Lower leg skin (tissue), 4 donors: ENCODE measurements at regions of chr6 and their contacts with region 1.

Region 1: GRCh38 chr6:93196406-93196970 is 222.9 kb downstream of the EPHA7 start:
- DNase-seq: no peak
- H3K4me3 ChIP-seq: no peak overlapping the region
- CTCF ChIP-seq: no peak
- POLR2A ChIP-seq: no peak

Region 2: GRCh38 chr6:92849639-92850038 is 346.8 kb before region 1 on chr6:
- intact Hi-C with region 1: loop called (anchors 5 kb)
- DNase-seq: no peak
- H3K4me3 ChIP-seq: no peak overlapping the region
- CTCF ChIP-seq: no peak
- POLR2A ChIP-seq: no peak